OCI-LY7 (cell line): ENCODE measurements at regions of chr2 and their contacts with region 1.

Region 1: GRCh38 chr2:20844246-20844645 is 21.3 kb upstream of the LDAH start:
- DNase-seq: no peak
- H3K4me3 ChIP-seq: no peak overlapping the region
- H3K27ac ChIP-seq: no peak overlapping the region
- H3K4me1 ChIP-seq: no peaks in the 10 kb centered on the region
- CTCF ChIP-seq: no peak

Region 2: GRCh38 chr2:20953145-20953824 is 109.0 kb after region 1 on chr2:
- CTCF ChIA-PET with region 1: no interaction called
- POLR2A ChIA-PET with region 1: no interaction called
- intact Hi-C with region 1: loop called (anchors 5 kb)
- DNase-seq: no peak
- H3K4me3 ChIP-seq: no peak overlapping the region
- H3K27ac ChIP-seq: no peak overlapping the region
- H3K4me1 ChIP-seq: no peaks in the 10 kb centered on the region
- CTCF ChIP-seq: no peak